ENCODE measurements at regions of chr22 and their contacts with region 1.

Region 1: DNA sequence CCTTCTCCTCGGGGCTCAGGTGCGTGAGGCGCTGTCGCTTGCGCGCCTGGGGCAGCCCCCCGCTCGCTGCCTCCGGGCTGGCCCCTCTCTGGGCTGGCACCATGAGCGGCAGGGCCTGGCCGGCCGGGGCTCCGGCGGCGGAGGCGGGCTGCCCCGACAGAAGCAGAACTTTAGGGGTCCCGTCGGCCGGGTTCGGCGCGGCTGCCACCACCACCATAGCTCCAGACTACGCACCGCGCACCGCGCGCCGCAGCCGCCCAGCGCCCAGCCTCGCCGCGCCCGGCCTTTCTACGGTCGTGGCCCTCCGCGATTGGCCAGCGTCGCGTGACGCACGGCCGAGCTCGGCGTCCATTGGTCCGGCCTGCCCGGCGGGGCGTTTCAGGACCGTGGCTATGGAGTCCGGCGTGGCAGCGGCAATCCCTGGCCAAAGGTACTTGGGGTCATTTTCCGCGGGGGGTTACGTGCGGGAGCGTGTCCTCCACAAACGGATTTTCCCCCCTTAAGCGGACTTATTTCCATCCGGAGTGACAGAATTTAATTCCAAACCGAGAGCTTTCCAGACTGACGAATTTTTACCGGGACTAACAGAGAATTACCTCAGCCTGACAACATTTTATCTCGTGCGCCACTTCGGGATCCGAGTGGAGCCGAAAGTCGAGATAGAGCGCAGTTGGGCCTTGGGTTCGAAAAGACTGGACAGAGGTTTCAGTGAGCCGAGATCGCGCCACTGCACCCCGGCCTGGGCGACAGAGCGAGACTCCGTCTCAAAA is at the start of gene XBP1:
- DNase-seq: peak; percentile 95 to 98 (median 97)
- ATAC-seq: peak; percentile 97 to 98 (median 97)
- H3K4me3 ChIP-seq: peak within 1 kb of the TSS; percentile 70 to 100 (median 90)
- H3K27ac ChIP-seq: peak within 1 kb of the TSS; percentile 97 to 100 (median 100)
- H3K4me1 ChIP-seq: peaks cover 20 to 65% (median 48%) of the 10 kb centered on the region in 12 donors
- H3K27me3 ChIP-seq: no peaks in the 10 kb centered on the region
- CTCF ChIP-seq: no peak
- POLR2A ChIP-seq: peak; percentile 93 to 99
- total RNA-seq, gene XBP1: 59.8 to 133 (median 88.1) TPM

Region 2: GRCh38 chr22:28656181-28656580 is 144.3 kb before region 1 on chr22:
- intact Hi-C with region 1: no loop called
- DNase-seq: no peak
- ATAC-seq: no peak
- H3K4me3 ChIP-seq: no peak overlapping the region
- H3K27ac ChIP-seq: no peak overlapping the region
- H3K4me1 ChIP-seq: no peaks in the 10 kb centered on the region
- H3K27me3 ChIP-seq: no peaks in the 10 kb centered on the region
- CTCF ChIP-seq: no peak
- POLR2A ChIP-seq: no peak

Region 3: GRCh38 chr22:28741758-28742561 is 58.5 kb before region 1 on chr22 and contains the starts of genes CHEK2 and HSCB:
- intact Hi-C with region 1: loop called in 3 of 10 experiments (anchors 1 to 2 kb)
- DNase-seq: peak; percentile 98 to 99 (median 99)
- ATAC-seq: peak; percentile 98 to 99 (median 99)
- H3K4me3 ChIP-seq: peak within 1 kb of the TSS; percentile 67 to 99 (median 83)
- H3K27ac ChIP-seq: peak within 1 kb of the TSS; percentile 95 to 100 (median 99)
- H3K4me1 ChIP-seq: peaks cover 0 to 17% (median 10%) of the 10 kb centered on the region in 12 donors
- H3K27me3 ChIP-seq: no peaks in the 10 kb centered on the region
- CTCF ChIP-seq: peak in 4 of 12 donors; percentile 15 to 20 (median 16)
- POLR2A ChIP-seq: peak in 1 of 2 donors; percentile 65
- total RNA-seq, gene CHEK2: 1.1 to 7.8 (median 1.6) TPM
- total RNA-seq, gene HSCB: 7.4 to 18.3 (median 10.9) TPM

Region 4: DNA sequence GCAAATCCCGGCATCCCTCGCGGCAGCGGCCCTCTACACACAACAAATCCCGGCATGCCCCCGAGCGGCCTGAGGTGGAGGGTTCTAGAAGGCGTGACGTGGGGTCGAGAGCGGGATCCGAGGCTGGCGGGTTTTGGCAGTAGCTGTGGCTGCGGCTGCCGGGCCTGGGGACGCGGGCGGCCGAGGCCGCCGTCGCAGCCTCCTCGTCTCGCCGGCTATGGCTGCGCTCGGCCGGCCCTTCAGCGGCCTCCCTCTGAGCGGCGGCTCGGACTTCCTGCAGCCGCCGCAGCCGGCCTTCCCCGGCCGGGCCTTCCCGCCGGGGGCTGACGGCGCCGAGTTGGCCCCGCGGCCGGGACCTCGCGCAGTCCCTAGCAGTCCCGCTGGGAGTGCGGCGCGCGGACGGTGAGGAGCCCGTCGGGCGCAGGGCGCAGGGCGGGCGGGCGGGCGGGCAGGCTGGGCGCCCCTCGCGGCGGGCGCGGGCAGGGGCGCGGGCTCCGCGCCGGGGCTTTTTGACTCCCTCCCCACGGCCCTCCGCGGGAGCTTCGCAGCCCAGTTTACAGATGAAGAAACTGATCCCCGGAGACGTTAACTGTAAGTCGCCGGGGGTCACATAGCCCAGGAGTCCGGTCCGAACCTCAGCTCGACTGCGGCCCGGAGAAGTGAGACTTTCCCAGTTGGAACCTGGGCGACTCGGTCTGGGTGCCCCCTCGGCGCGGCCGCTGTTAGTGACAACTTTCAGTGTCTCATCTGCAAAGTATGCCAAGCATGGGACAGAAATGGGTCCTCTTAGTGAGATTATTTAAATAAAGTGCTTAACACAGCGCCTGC is 27.6 kb before region 1 on chr22 and contains the start of gene CCDC117:
- intact Hi-C with region 1: loop called in 3 of 10 experiments (anchors 2 kb)
- DNase-seq: peak; percentile 96 to 98 (median 97)
- ATAC-seq: peak; percentile 98 to 99 (median 99)
- H3K4me3 ChIP-seq: peak within 1 kb of the TSS; percentile 65 to 93 (median 80)
- H3K27ac ChIP-seq: peak within 1 kb of the TSS; percentile 86 to 100 (median 97)
- H3K4me1 ChIP-seq: peaks cover 0 to 26% (median 19%) of the 10 kb centered on the region in 12 donors
- H3K27me3 ChIP-seq: no peaks in the 10 kb centered on the region
- CTCF ChIP-seq: peak in 6 of 12 donors; percentile 3 to 41 (median 24)
- POLR2A ChIP-seq: peak; percentile 23 to 88
- total RNA-seq, gene CCDC117: 8.9 to 16.6 (median 13.3) TPM

Measured in heart left ventricle (tissue), 16 donors.